SK-N-SH (cell line): ENCODE measurements at regions of chr1 and their contacts with region 1.

Region 1: DNA sequence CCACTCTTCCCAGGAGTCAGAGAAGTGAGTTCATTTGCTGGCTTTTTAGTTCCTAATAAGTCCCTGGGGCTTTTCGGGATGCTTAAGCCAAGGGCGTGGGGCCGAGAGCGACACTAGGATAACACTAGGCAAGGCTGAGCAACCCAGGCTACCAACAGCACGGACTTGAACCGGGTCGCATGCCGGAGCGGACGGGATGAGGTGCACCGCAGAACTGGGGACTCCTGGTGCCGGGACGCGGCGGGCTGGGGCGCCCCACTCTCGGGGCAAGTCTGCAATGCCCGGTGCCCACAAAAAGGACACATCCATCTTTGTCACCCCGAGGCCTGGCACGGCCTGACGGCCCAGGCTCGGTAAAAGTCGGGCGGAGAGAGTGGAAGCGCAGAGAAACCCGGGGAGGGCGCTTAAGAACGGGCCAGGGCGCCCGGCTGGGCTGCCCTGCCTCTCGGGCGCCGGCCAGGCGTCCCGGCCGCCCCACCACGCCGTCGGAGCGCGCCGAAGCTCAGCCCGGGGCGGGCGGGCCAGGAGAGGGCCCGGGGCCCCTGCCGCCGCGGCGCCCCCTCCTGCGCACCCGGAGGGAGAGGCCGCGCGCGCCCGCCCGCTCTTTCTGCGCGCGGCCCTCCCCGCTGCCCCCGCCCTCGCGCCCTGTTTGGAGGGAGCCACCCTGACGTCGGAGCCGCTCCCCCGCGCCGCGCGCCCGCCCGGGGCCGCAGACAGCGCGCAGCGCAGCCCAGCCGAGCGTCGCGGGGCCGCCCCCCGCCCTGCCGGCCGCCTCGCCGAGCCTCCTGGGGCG is at the start of gene NBL1:
- DNase-seq: peak; percentile 93
- H3K4me3 ChIP-seq: peak within 1 kb of the TSS; percentile 66 to 74
- H3K27ac ChIP-seq: peak within 1 kb of the TSS in 1 of 2 experiments; percentile 80; a peak in 2 of 4 replicates
- H3K4me1 ChIP-seq: peaks cover 0 to 25% of the 10 kb centered on the region in 2 experiments; a peak in 1 of 4 replicates
- H3K27me3 ChIP-seq: no peaks in the 10 kb centered on the region
- CTCF ChIP-seq: no peak
- EP300 ChIP-seq: no peak
- RAD21 ChIP-seq: no peak
- polyA plus RNA-seq, gene NBL1: 34.9 and 36.1 TPM in 2 replicates

Region 2: GRCh38 chr1:19485362-19486187 is 158.2 kb before region 1 on chr1 and contains the start of gene CAPZB:
- CTCF ChIA-PET with region 1: interaction called, 15 read pairs
- POLR2A ChIA-PET with region 1: no interaction called
- DNase-seq: peak; percentile 99
- H3K4me3 ChIP-seq: peak within 1 kb of the TSS; percentile 71 to 93
- H3K27ac ChIP-seq: peak within 1 kb of the TSS; percentile 74 to 94
- H3K4me1 ChIP-seq: peaks cover 34 to 44% of the 10 kb centered on the region in 2 experiments
- H3K27me3 ChIP-seq: no peaks in the 10 kb centered on the region
- CTCF ChIP-seq: no peak
- EP300 ChIP-seq: no peak
- RAD21 ChIP-seq: no peak
- polyA plus RNA-seq, gene CAPZB: 116 and 122 TPM in 2 replicates